Activated B cell treated with CpG ODN at 0.5 μM for 24 hours (primary cell): ENCODE measurements at regions of chr5 and their contacts with region 1.

Region 1: DNA sequence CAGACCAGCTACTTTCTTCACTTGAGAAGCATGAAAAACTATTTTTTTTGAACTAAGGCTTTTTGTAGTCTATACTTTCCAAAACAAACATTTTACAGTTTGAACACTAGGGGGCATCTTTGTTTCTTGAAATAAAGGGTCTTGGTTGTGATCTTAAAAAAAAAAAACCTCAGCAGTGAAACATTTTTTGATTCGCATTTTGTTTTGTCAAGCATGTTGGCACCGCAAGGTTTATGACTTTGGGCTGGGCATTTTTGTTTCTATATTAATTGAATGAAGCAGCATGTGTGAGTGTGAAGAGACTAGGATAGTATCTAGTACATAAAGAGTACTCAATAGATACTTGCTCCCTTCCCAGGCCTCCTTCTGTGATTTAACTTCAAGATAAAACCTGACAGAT is 31.6 kb upstream of the ACOT12 start:
- DNase-seq: no peak
- ATAC-seq: peak; percentile 50
- H3K4me3 Mint-ChIP-seq: no peak overlapping the region
- H3K27ac Mint-ChIP-seq: no peak overlapping the region
- H3K4me1 Mint-ChIP-seq: peaks cover 2% of the 10 kb centered on the region
- H3K27me3 Mint-ChIP-seq: no peaks in the 10 kb centered on the region
- CTCF ChIP-seq: peak; percentile 41

Region 2: GRCh38 chr5:80860924-80861613 is 564.5 kb before region 1 on chr5:
- CTCF ChIA-PET with region 1: no interaction called
- POLR2A ChIA-PET with region 1: no interaction called
- intact Hi-C with region 1: no loop called
- DNase-seq: no peak
- ATAC-seq: no peak
- H3K4me3 Mint-ChIP-seq: no peak overlapping the region
- H3K27ac Mint-ChIP-seq: no peak overlapping the region
- H3K4me1 Mint-ChIP-seq: peaks cover 2% of the 10 kb centered on the region
- H3K27me3 Mint-ChIP-seq: no peaks in the 10 kb centered on the region
- CTCF ChIP-seq: no peak

Region 3: GRCh38 chr5:81838307-81838906 is 412.8 kb after region 1 on chr5:
- CTCF ChIA-PET with region 1: interaction called, 4 read pairs
- POLR2A ChIA-PET with region 1: no interaction called
- intact Hi-C with region 1: loop called (anchors 1 kb)
- DNase-seq: no peak
- ATAC-seq: peak; percentile 73
- H3K4me3 Mint-ChIP-seq: no peak overlapping the region
- H3K27ac Mint-ChIP-seq: no peak overlapping the region
- H3K4me1 Mint-ChIP-seq: peaks cover 2% of the 10 kb centered on the region
- H3K27me3 Mint-ChIP-seq: no peaks in the 10 kb centered on the region
- CTCF ChIP-seq: no peak

Region 4: DNA sequence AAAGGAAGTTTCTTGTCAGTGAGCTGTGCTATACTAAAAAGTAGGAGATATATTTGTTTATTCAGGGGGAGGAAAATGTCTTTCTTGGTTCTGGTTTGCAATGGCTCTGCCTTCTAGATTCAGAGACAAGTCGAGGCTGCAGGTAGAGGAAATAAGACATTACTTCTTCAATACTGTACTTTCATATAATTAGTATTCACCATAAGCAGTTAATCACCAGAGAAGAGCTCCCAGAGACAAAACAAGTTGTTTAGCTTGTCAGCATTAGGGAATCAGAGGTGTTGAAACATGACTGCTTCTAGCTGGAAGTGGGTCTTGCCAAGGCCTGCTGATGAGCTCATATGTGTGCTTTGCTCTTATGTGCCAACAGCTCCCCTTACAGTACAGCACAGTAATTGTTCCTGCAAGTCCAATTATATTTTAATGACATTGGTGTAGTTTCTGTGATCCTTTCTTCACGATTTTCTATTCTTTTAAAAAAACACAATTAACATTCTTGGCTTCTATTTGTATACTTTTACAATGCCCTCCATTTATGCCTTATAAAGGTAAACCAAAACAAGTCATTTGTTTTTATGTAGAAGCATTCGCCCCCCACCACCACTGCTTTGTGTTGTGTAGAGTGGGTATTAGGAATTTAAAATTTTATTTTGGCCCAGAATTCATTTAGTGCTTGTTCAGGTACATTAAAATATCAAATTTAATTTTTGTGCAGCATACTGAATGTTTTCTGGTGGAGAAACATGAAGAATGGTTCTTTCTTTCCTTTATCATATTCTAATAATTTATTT is 740.4 kb after region 1 on chr5:
- CTCF ChIA-PET with region 1: interaction called, 41 read pairs
- POLR2A ChIA-PET with region 1: no interaction called
- intact Hi-C with region 1: loop called (anchors 1 kb)
- DNase-seq: no peak
- ATAC-seq: peak; percentile 84
- H3K4me3 Mint-ChIP-seq: no peak overlapping the region
- H3K27ac Mint-ChIP-seq: no peak overlapping the region
- H3K4me1 Mint-ChIP-seq: peaks cover 3% of the 10 kb centered on the region
- H3K27me3 Mint-ChIP-seq: no peaks in the 10 kb centered on the region
- CTCF ChIP-seq: no peak

Region 5: GRCh38 chr5:82225525-82226172 is 800.1 kb after region 1 on chr5:
- CTCF ChIA-PET with region 1: interaction called, 41 read pairs
- POLR2A ChIA-PET with region 1: no interaction called
- intact Hi-C with region 1: loop called (anchors 1 kb)
- DNase-seq: peak; percentile 33
- ATAC-seq: peak; percentile 89
- H3K4me3 Mint-ChIP-seq: no peak overlapping the region
- H3K27ac Mint-ChIP-seq: no peak overlapping the region
- H3K4me1 Mint-ChIP-seq: peaks cover 3% of the 10 kb centered on the region
- H3K27me3 Mint-ChIP-seq: no peaks in the 10 kb centered on the region
- CTCF ChIP-seq: peak; percentile 60

Region 6: GRCh38 chr5:82259172-82259800 is 833.7 kb after region 1 on chr5:
- CTCF ChIA-PET with region 1: interaction called, 4 read pairs
- POLR2A ChIA-PET with region 1: no interaction called
- intact Hi-C with region 1: loop called (anchors 1 kb)
- DNase-seq: no peak
- ATAC-seq: no peak
- H3K4me3 Mint-ChIP-seq: no peak overlapping the region
- H3K27ac Mint-ChIP-seq: no peak overlapping the region
- H3K4me1 Mint-ChIP-seq: peaks cover 2% of the 10 kb centered on the region
- H3K27me3 Mint-ChIP-seq: no peaks in the 10 kb centered on the region
- CTCF ChIP-seq: no peak